Breast epithelium (tissue), 4 donors: ENCODE measurements at regions of chrX and their contacts with region 1.

Region 1: GRCh38 chrX:136909706-136910564 is 29.4 kb upstream of the RBMX start:
- DNase-seq: peak; percentile 56 to 86
- H3K4me3 ChIP-seq: peak overlapping the region; percentile 55 to 71 (median 64)
- H3K27ac ChIP-seq: peak overlapping the region; percentile 85 to 87
- H3K4me1 ChIP-seq: no peaks in the 10 kb centered on the region
- H3K27me3 ChIP-seq: no peaks in the 10 kb centered on the region
- CTCF ChIP-seq: no peak
- POLR2A ChIP-seq: no peak

Region 2: GRCh38 chrX:136616987-136617685 is 292.8 kb before region 1 on chrX:
- intact Hi-C with region 1: loop called (anchors 5 kb)
- DNase-seq: no peak
- H3K4me3 ChIP-seq: no peak overlapping the region
- H3K27ac ChIP-seq: no peak overlapping the region
- H3K4me1 ChIP-seq: no peaks in the 10 kb centered on the region
- H3K27me3 ChIP-seq: peaks cover 0 to 22% of the 10 kb centered on the region in 2 donors
- CTCF ChIP-seq: no peak
- POLR2A ChIP-seq: no peak